ENCODE measurements at regions of chr2 and their contacts with region 1.

Region 1: GRCh38 chr2:85011747-85012146 is 40.8 kb downstream of the KCMF1 start:
- DNase-seq: no peak
- ATAC-seq: no peak
- H3K4me3 Mint-ChIP-seq: no peak overlapping the region
- H3K27ac Mint-ChIP-seq: peak overlapping the region; percentile 80
- H3K4me1 Mint-ChIP-seq: peaks cover 90% of the 10 kb centered on the region
- H3K27me3 Mint-ChIP-seq: no peaks in the 10 kb centered on the region

Region 2: DNA sequence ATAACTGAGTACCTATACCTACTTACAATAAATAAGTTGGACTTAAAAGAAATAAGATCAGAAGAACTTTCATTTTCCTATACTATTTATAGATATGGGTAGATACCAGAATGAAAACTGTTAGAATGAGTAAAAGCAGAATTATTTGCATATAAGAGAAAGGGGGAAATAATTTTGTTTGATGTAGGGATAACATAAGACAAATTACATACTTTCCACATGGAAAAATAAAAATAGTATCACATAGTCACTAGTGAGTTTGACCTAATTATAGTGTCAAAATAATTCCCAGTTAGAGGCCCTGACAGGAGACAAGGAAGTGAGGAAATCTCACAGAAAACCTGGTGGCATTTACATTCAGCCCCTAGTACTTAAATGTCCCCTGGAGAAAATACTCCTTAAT is 12.2 kb before region 1 on chr2:
- CTCF ChIA-PET with region 1: interaction called, 20 read pairs
- POLR2A ChIA-PET with region 1: interaction called, 4 read pairs
- intact Hi-C with region 1: loop called in 1 of 2 experiments (anchors 1 kb)
- DNase-seq: no peak
- ATAC-seq: peak; percentile 31
- H3K4me3 Mint-ChIP-seq: peak overlapping the region; percentile 45
- H3K27ac Mint-ChIP-seq: peak overlapping the region; percentile 96
- H3K4me1 Mint-ChIP-seq: peaks cover 80% of the 10 kb centered on the region
- H3K27me3 Mint-ChIP-seq: no peaks in the 10 kb centered on the region